Mammary epithelial cell (primary cell): ENCODE measurements at regions of chr13 and their contacts with region 1.

Region 1: GRCh38 chr13:32538621-32539246 is at the start of gene N4BP2L2:
- DNase-seq: peak; percentile 95
- H3K4me3 ChIP-seq: peak within 1 kb of the TSS; percentile 68 to 95 (median 77)
- H3K27ac ChIP-seq: peak within 1 kb of the TSS; percentile 90
- H3K4me1 ChIP-seq: peaks cover 4% of the 10 kb centered on the region
- H3K27me3 ChIP-seq: no peaks in the 10 kb centered on the region
- CTCF ChIP-seq: peak in 1 of 2 donors; percentile 8
- total RNA-seq, gene N4BP2L2: 99.0 to 102 TPM

Region 2: GRCh38 chr13:32323912-32324311 is 214.8 kb before region 1 on chr13:
- CTCF ChIA-PET with region 1: no interaction called
- dilution Hi-C with region 1: no loop called
- in situ Hi-C with region 1: no loop called
- intact Hi-C with region 1: loop called (anchors 10 kb)
- DNase-seq: peak; percentile 39
- H3K4me3 ChIP-seq: no peak overlapping the region
- H3K27ac ChIP-seq: peak overlapping the region; percentile 70
- H3K4me1 ChIP-seq: peaks cover 4% of the 10 kb centered on the region
- H3K27me3 ChIP-seq: no peaks in the 10 kb centered on the region
- CTCF ChIP-seq: no peak

Region 3: DNA sequence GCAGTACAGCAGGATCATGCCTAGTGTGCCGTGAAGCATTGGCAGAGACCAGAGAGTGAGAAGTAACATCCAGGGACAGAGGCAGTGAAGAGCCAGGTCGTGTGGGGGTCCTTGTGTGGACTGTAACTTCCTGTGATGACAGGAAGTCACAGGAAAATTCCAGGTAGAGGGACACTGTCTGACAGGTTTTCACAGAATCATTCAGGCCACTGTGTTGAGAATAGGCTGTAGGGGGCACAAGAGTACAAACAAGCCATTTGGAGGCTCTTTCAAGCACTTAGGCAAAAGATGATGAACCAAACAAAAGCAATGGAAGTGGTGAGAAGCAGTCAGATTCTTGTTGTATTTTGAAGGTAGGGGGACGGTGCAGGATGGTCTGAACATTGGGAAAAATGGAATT is 157.2 kb before region 1 on chr13:
- CTCF ChIA-PET with region 1: no interaction called
- dilution Hi-C with region 1: no loop called
- in situ Hi-C with region 1: no loop called
- intact Hi-C with region 1: loop called (anchors 2 kb)
- DNase-seq: peak; percentile 13
- H3K4me3 ChIP-seq: no peak overlapping the region
- H3K27ac ChIP-seq: no peak overlapping the region
- H3K4me1 ChIP-seq: no peaks in the 10 kb centered on the region
- H3K27me3 ChIP-seq: no peaks in the 10 kb centered on the region
- CTCF ChIP-seq: peak; percentile 9 to 64